Sigmoid colon (tissue), 7 donors: ENCODE measurements at regions of chr20 and their contacts with region 1.

Region 1: DNA sequence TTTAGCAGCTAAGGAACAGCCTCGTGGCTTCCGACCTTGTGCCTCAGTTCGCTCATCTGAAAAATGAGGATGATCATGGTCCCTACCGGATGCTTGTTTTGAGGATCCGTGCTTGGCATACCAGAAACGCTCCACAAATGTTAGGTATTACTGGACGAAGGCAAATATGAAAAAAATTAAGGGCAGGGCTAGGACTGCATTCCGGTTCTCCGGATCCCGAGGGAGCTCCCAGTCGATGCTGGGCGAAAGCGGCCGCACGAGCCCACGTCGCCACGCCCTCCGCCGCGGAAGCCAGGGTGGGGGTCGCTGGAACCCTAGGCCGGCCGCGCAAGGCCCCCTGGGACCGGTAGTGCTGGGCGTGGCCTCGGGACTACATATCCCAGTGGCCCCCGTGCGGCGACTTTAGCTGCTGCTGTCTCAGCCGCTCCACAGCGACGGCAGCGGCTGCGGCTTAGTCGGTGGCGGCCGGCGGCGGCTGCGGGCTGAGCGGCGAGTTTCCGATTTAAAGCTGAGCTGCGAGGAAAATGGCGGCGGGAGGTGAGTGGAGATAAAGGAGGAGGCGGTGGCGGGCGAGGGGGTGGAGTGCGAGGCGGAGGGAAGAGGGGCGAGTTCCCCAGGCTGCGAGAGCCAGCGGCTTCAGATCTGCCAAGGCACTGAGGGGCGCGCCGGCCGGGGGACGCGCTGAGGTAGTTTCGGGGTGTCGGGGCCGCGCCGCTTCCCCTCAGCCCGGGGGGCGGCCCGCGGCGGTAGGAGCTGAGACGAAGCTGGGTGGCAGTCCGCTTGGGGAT is at the start of gene NCOA3:
- DNase-seq: peak; percentile 95
- H3K4me3 ChIP-seq: peak within 1 kb of the TSS; percentile 69 to 94 (median 91)
- H3K27ac ChIP-seq: peak within 1 kb of the TSS; percentile 91 to 96 (median 94)
- H3K4me1 ChIP-seq: peaks cover 0 to 24% (median 17%) of the 10 kb centered on the region in 4 donors
- H3K27me3 ChIP-seq: no peaks in the 10 kb centered on the region
- CTCF ChIP-seq: peak; percentile 42 to 81 (median 70)
- EP300 ChIP-seq: no peak
- POLR2A ChIP-seq: peak; percentile 93 to 96
- total RNA-seq, gene NCOA3: 22.8 to 51.0 (median 26.4) TPM

Region 2: GRCh38 chr20:47576516-47577033 is 74.9 kb after region 1 on chr20:
- intact Hi-C with region 1: loop called (anchors 5 kb)
- DNase-seq: peak; percentile 78
- H3K4me3 ChIP-seq: peak overlapping the region in 3 of 4 donors; percentile 16 to 32 (median 26)
- H3K27ac ChIP-seq: peak overlapping the region; percentile 39 to 77 (median 68)
- H3K4me1 ChIP-seq: peaks cover 0 to 79% (median 58%) of the 10 kb centered on the region in 4 donors
- H3K27me3 ChIP-seq: no peaks in the 10 kb centered on the region
- CTCF ChIP-seq: no peak
- EP300 ChIP-seq: peak in 1 of 4 donors; percentile 37
- POLR2A ChIP-seq: peak in 1 of 2 donors; percentile 11

Region 3: GRCh38 chr20:47648943-47649342 is 147.3 kb after region 1 on chr20:
- intact Hi-C with region 1: no loop called
- DNase-seq: no peak
- H3K4me3 ChIP-seq: no peak overlapping the region
- H3K27ac ChIP-seq: no peak overlapping the region
- H3K4me1 ChIP-seq: no peaks in the 10 kb centered on the region
- H3K27me3 ChIP-seq: no peaks in the 10 kb centered on the region
- CTCF ChIP-seq: no peak
- EP300 ChIP-seq: no peak
- POLR2A ChIP-seq: no peak